ENCODE measurements at regions of chr5 and their contacts with region 1.

Region 1: GRCh38 chr5:134380346-134380745 is 9.0 kb downstream of the UBE2B start:
- DNase-seq: no peak
- H3K4me3 Mint-ChIP-seq: no peak overlapping the region
- H3K27ac Mint-ChIP-seq: no peak overlapping the region
- H3K4me1 Mint-ChIP-seq: no peaks in the 10 kb centered on the region
- H3K27me3 Mint-ChIP-seq: no peaks in the 10 kb centered on the region
- CTCF ChIP-seq: no peak

Region 2: DNA sequence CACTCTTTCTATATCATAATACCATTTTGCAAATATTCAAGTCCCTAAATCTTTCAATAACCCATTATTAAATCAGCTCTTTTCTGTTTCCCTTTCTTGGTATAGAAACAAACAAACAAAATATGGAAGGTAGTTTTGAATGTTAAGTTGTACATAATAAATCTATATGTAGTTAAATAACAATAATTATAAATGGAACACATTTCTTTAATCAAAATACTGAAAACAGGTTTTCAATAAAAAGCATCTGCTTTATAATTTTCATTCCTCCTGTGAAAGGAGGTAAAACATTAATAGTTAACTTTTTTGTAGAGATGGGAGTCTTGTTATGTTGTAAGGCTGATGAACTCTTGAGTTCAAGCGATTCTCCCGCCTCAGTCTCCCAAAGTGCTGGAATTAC is 67.5 kb before region 1 on chr5:
- CTCF ChIA-PET with region 1: no interaction called
- POLR2A ChIA-PET with region 1: no interaction called
- intact Hi-C with region 1: no loop called
- DNase-seq: no peak
- H3K4me3 Mint-ChIP-seq: no peak overlapping the region
- H3K27ac Mint-ChIP-seq: no peak overlapping the region
- H3K4me1 Mint-ChIP-seq: no peaks in the 10 kb centered on the region
- H3K27me3 Mint-ChIP-seq: no peaks in the 10 kb centered on the region
- CTCF ChIP-seq: no peak

Region 3: DNA sequence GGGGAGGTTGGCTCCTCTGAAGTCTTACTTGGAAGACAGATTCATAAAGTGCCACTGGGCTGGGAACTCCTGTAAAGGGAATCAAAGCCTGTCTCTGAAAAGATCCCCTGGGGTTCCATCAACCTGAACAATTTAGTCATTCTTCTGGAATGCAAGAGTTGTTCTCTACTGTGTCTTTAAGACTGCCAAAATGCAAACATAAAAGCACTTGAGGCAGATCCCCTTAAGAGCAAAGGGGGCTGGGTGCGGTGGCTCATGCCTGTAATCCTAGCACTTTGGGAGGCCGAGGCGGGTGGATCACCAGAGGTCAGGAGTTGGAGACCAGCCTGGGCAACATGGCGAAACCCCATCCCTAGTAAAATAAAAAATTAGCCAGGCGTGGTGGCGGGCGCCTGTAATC is 14.6 kb after region 1 on chr5:
- CTCF ChIA-PET with region 1: interaction called, 11 read pairs
- POLR2A ChIA-PET with region 1: interaction called, 6 read pairs
- intact Hi-C with region 1: no loop called
- DNase-seq: no peak
- H3K4me3 Mint-ChIP-seq: no peak overlapping the region
- H3K27ac Mint-ChIP-seq: no peak overlapping the region
- H3K4me1 Mint-ChIP-seq: peaks cover 12% of the 10 kb centered on the region
- H3K27me3 Mint-ChIP-seq: no peaks in the 10 kb centered on the region
- CTCF ChIP-seq: no peak

Region 4: DNA sequence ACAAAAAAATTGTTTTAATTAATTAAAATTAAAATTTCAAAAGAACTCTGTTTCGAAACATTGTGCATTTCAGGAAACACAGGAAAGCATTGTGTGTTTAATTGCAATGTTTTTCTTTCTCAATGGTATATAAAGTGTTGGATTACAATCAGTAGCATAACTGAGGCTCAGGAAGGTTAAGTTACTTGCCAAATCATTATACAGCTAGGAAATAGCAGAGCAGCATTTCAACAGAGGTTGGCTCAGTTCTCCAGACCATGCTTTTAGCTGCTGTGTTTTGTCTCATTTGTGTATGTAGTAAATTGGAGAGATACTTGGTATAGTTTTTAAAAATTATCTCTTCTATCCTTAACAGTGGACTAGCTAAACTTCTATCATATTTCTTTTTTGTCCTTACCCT is 328.0 kb after region 1 on chr5:
- CTCF ChIA-PET with region 1: no interaction called
- POLR2A ChIA-PET with region 1: no interaction called
- intact Hi-C with region 1: no loop called
- DNase-seq: peak; percentile 14
- H3K4me3 Mint-ChIP-seq: no peak overlapping the region
- H3K27ac Mint-ChIP-seq: no peak overlapping the region
- H3K4me1 Mint-ChIP-seq: no peaks in the 10 kb centered on the region
- H3K27me3 Mint-ChIP-seq: no peaks in the 10 kb centered on the region
- CTCF ChIP-seq: no peak